Common myeloid progenitor, CD34-positive (primary cell): ENCODE measurements at regions of chr7 and their contacts with region 1.

Region 1: DNA sequence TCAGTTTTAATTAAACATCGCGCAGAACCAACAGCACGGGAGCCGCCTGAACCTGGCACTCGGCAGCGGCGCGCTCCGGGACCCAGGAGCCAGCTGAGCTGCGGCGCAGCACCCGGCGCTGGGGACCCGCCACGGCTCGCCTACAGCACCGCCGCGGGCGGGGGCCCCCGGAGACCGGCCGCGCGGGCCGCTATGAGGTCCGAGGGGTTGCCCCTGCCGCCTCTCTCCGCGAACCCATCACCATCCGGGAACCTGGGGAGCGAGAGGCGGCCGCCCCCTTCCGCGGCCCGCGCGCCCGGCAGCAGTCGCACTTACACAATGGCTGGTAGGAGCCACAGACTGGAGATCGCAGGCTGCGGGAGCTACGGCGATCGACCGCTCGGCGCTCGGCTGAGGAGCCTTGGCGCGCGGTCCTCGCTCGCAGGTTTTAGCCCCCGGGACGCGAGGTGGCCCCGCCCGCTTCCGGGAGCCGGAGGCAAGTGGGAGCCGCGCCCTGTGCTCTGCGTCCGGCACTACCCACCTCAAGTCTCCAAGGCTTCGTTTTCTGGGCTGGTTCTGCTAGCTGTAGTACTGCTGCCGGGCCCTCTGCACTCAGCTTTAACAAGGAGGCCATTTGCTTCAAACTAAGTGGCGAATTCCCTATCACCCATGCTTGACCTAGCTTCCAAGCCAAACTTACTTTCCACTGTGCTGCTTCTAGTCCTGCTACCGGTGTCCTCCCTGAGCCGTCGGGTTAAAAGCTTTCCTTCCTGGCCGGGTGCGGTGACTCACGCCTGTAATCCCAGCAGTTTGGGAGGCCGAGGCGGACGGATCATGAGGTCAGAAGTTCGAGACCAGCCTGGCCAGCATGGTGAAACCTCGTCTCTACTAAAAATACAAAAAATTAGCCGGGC is at the start of gene TPK1:
- DNase-seq: peak; percentile 95 to 98 (median 97)
- H3K4me3 ChIP-seq: peak within 1 kb of the TSS; percentile 74 to 99 (median 87)
- H3K27ac ChIP-seq: peak within 1 kb of the TSS; percentile 74 to 89
- H3K4me1 ChIP-seq: peaks cover 6 to 20% (median 15%) of the 10 kb centered on the region in 4 experiments
- H3K27me3 ChIP-seq: no peaks in the 10 kb centered on the region

Region 2: GRCh38 chr7:144738708-144739314 is 97.1 kb before region 1 on chr7:
- CTCF ChIA-PET with region 1: interaction called, 14 read pairs
- POLR2A ChIA-PET with region 1: interaction called, 5 read pairs
- DNase-seq: peak; percentile 37 to 60 (median 54)
- H3K4me3 ChIP-seq: no peak overlapping the region
- H3K27ac ChIP-seq: no peak overlapping the region
- H3K4me1 ChIP-seq: peaks cover 0 to 5% (median 2%) of the 10 kb centered on the region in 4 experiments
- H3K27me3 ChIP-seq: no peaks in the 10 kb centered on the region

Region 3: DNA sequence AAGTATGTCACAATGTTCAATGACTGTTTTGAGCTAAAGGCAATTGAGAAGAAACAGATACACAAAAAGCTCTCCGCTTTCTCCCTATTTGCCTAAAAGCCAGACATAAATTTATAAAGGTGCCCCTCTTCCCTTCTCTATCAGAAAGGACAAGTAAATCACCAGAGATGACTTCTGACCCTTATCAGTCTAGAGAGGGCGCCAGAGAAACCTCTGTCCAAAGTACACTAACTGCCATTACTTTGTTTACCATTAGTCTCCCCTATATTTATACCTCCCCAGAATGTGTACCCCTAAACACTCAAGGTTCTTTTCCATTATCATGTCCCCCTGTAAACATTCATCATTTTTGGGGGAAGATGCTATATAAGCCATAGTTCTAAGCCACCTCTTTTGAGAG is 49.4 kb before region 1 on chr7:
- CTCF ChIA-PET with region 1: interaction called, 12 read pairs
- POLR2A ChIA-PET with region 1: no interaction called
- DNase-seq: peak in 2 of 3 donors; percentile 9
- H3K4me3 ChIP-seq: no peak overlapping the region
- H3K27ac ChIP-seq: no peak overlapping the region
- H3K4me1 ChIP-seq: peaks cover 0 to 2% (median 0%) of the 10 kb centered on the region in 4 experiments
- H3K27me3 ChIP-seq: no peaks in the 10 kb centered on the region

Region 4: GRCh38 chr7:144862612-144863319 is 26.9 kb after region 1 on chr7:
- CTCF ChIA-PET with region 1: no interaction called
- POLR2A ChIA-PET with region 1: no interaction called
- DNase-seq: peak in 2 of 3 donors; percentile 23 to 30
- H3K4me3 ChIP-seq: no peak overlapping the region
- H3K27ac ChIP-seq: no peak overlapping the region
- H3K4me1 ChIP-seq: no peaks in the 10 kb centered on the region
- H3K27me3 ChIP-seq: no peaks in the 10 kb centered on the region